ENCODE measurements at regions of chr1 and their contacts with region 1.

Region 1: DNA sequence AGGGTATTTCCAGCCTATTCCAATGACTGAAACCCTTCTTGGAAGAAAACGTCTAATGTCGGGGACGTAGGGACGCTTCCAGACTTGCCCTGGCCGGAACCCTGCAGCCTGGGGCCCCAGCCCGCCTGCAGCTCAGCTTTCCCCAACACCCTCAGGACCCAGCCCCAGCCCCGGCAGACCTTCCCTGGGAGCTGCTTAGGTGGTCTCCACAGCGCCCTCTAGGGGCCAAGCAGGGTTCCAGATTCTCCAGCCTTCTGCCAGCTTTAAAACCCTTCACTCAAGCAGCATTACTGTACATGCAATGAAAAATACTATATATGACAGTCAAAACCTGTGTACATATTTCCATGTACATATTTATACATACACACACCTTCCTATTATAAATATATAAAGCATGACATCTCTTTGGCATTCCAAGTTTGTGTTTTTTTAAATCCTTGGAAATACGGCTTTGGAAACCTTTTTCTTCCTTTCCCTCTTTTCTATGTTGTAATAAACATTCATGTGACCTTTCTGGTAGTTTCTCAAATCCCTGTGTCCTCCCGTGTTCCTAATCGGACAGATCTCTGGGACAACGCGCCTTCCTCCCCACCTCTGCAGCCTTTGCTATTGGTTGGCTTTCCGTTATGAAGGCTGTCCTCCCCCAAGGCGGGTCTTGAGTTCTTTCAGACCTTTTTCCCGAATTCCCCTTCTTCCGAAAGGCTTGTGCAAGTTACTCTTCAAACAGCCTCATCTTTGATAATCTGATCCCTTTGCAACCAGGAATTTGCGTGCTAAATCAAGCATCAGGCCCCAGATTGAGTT is 60.3 kb downstream of the STUM start:
- DNase-seq: peak; percentile 74 to 81 (median 76)
- ATAC-seq: peak; percentile 61
- H3K4me3 ChIP-seq: no peak overlapping the region
- H3K27ac ChIP-seq: no peak overlapping the region
- H3K4me1 ChIP-seq: no peaks in the 10 kb centered on the region
- H3K27me3 ChIP-seq: no peaks in the 10 kb centered on the region
- CTCF ChIP-seq: peak; percentile 67 to 91 (median 74)
- POLR2A ChIP-seq: no peak

Region 2: GRCh38 chr1:226424228-226425003 is 184.5 kb before region 1 on chr1:
- intact Hi-C with region 1: loop called (anchors 10 kb)
- DNase-seq: no peak
- ATAC-seq: peak; percentile 62
- H3K4me3 ChIP-seq: no peak overlapping the region
- H3K27ac ChIP-seq: no peak overlapping the region
- H3K4me1 ChIP-seq: no peaks in the 10 kb centered on the region
- H3K27me3 ChIP-seq: no peaks in the 10 kb centered on the region
- CTCF ChIP-seq: peak; percentile 41 to 79 (median 68)
- POLR2A ChIP-seq: no peak

Region 3: GRCh38 chr1:226702957-226703831 is 94.3 kb after region 1 on chr1:
- intact Hi-C with region 1: no loop called
- DNase-seq: peak; percentile 63 to 78 (median 68)
- ATAC-seq: peak; percentile 88
- H3K4me3 ChIP-seq: peak overlapping the region; percentile 23 to 38
- H3K27ac ChIP-seq: peak overlapping the region; percentile 90 to 97 (median 94)
- H3K4me1 ChIP-seq: peaks cover 16% of the 10 kb centered on the region
- H3K27me3 ChIP-seq: no peaks in the 10 kb centered on the region
- CTCF ChIP-seq: peak in 1 of 7 experiments; percentile 18
- POLR2A ChIP-seq: peak; percentile 63 to 79 (median 71)